PC-9 (cell line): ENCODE measurements at regions of chr20 and their contacts with region 1.

Region 1: DNA sequence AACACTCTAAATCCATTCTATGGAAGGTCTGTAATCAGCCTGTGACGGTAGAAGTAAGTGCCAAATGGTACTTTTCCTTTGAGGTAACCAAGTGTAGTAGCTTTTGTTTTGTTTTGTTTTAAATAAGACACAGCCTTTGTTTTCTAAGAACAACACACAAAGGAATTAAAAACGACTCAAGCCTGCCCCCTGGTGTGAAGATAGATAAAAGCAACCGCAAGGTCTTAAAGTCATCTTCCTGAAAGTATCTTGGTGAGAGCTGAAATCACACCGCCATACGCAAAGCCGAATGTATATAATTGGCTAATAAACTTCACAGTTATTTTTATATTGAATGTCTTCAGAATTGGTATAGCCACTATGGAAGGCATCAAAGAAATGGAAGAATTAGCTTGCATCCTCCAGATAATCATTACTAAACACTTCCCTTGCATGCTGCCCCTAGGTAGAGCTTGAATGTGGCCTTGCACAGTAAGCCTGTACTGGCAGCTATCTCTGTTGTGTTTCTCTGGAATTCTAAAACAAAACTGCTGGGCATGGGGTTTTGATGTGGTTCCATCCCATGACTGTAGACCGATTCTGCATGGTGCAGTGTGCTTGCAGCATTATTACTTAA is 95.6 kb downstream of the LAMP5 start:
- DNase-seq: peak in 1 of 2 experiments; percentile 58
- H3K4me3 ChIP-seq: no peak overlapping the region
- H3K27ac ChIP-seq: no peak overlapping the region
- H3K4me1 ChIP-seq: no peaks in the 10 kb centered on the region
- H3K27me3 ChIP-seq: no peaks in the 10 kb centered on the region
- CTCF ChIP-seq: peak; percentile 88

Region 2: DNA sequence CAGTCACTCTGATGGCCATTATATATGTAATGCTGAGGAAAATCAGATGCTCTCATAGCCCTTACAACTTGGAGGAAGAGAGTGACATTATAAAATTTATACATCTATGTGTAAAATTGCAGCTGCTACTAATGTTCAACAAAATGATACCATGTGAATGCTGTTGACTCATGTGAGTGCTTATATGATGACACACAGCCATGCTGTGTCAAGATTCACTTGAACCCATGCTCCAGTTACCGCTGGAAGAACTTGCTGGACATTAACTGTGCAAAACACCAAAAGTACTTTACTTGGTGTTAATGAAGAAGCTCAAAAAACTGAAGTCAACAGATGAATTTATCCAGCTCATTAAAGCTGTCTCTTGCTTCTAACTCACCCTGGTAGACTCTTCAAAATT is 860.0 kb before region 1 on chr20:
- CTCF ChIA-PET with region 1: no interaction called
- POLR2A ChIA-PET with region 1: no interaction called
- intact Hi-C with region 1: loop called (anchors 2 kb)
- DNase-seq: no peak
- H3K4me3 ChIP-seq: no peak overlapping the region
- H3K27ac ChIP-seq: no peak overlapping the region
- H3K4me1 ChIP-seq: no peaks in the 10 kb centered on the region
- H3K27me3 ChIP-seq: no peaks in the 10 kb centered on the region
- CTCF ChIP-seq: no peak

Region 3: DNA sequence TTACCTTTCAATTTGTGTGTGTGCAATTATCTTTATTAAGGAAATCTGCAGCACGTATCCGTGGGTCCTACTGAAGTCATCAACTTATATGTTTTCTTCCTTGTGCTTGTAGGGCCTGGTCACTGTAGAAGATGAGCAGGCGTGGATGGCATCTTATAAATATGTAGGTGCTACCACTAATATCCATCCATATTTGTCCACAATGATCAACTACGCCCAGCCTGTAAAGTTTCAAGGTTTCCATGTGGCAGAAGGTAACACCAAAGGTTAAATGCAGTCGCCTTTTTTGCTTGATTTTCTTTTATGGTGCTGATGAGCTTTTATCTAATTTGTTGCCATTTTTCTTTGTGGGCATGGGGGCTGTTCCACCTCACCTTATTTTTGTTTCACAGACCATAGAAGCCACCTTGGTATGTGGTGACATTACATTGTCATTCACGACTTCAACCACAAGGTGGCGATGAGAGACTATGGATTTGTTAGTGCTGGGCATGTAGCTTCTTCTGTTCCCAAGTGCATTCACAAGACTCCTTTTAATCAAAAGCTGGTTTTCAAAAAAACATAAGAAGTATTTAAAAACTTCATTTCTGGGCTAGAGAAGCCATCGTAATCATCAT is 202.1 kb before region 1 on chr20:
- CTCF ChIA-PET with region 1: interaction called, 7 read pairs
- POLR2A ChIA-PET with region 1: no interaction called
- intact Hi-C with region 1: loop called (anchors 1 kb)
- DNase-seq: peak; percentile 46 to 57
- H3K4me3 ChIP-seq: no peak overlapping the region
- H3K27ac ChIP-seq: no peak overlapping the region
- H3K4me1 ChIP-seq: peaks cover 11% of the 10 kb centered on the region
- H3K27me3 ChIP-seq: no peaks in the 10 kb centered on the region
- CTCF ChIP-seq: peak; percentile 95

Region 4: GRCh38 chr20:10306440-10307358 is 696.7 kb after region 1 on chr20:
- CTCF ChIA-PET with region 1: interaction called, 24 read pairs
- POLR2A ChIA-PET with region 1: no interaction called
- intact Hi-C with region 1: no loop called
- DNase-seq: peak in 1 of 2 experiments; percentile 78
- H3K4me3 ChIP-seq: no peak overlapping the region
- H3K27ac ChIP-seq: peak overlapping the region; percentile 43
- H3K4me1 ChIP-seq: peaks cover 59% of the 10 kb centered on the region
- H3K27me3 ChIP-seq: no peaks in the 10 kb centered on the region
- CTCF ChIP-seq: no peak